Gastrocnemius medialis (tissue), 4 donors: ENCODE measurements at regions of chr10 and their contacts with region 1.

Region 1: GRCh38 chr10:17872191-17873091 is 63.3 kb downstream of the MRC1 start:
- DNase-seq: no peak
- ATAC-seq: no peak
- H3K4me3 ChIP-seq: no peak overlapping the region
- H3K27ac ChIP-seq: no peak overlapping the region
- H3K4me1 ChIP-seq: no peaks in the 10 kb centered on the region
- H3K27me3 ChIP-seq: no peaks in the 10 kb centered on the region
- CTCF ChIP-seq: peak in 4 of 5 experiments; percentile 30 to 49 (median 40)
- POLR2A ChIP-seq: no peak

Region 2: GRCh38 chr10:17607603-17608332 is 264.7 kb before region 1 on chr10:
- in situ Hi-C with region 1: loop called in 3 of 4 experiments (anchors 10 kb)
- intact Hi-C with region 1: loop called (anchors 1 kb)
- DNase-seq: no peak
- ATAC-seq: peak; percentile 91 to 92
- H3K4me3 ChIP-seq: no peak overlapping the region
- H3K27ac ChIP-seq: no peak overlapping the region
- H3K4me1 ChIP-seq: no peaks in the 10 kb centered on the region
- H3K27me3 ChIP-seq: no peaks in the 10 kb centered on the region
- CTCF ChIP-seq: peak; percentile 64 to 94 (median 90)
- POLR2A ChIP-seq: no peak

Region 3: GRCh38 chr10:17685233-17685840 is 187.1 kb before region 1 on chr10:
- in situ Hi-C with region 1: no loop called
- intact Hi-C with region 1: no loop called
- DNase-seq: no peak
- ATAC-seq: no peak
- H3K4me3 ChIP-seq: no peak overlapping the region
- H3K27ac ChIP-seq: no peak overlapping the region
- H3K4me1 ChIP-seq: peaks cover 23 to 31% of the 10 kb centered on the region in 2 donors
- H3K27me3 ChIP-seq: no peaks in the 10 kb centered on the region
- CTCF ChIP-seq: no peak
- POLR2A ChIP-seq: no peak

Region 4: GRCh38 chr10:17737027-17737965 is 135.1 kb before region 1 on chr10:
- in situ Hi-C with region 1: no loop called
- intact Hi-C with region 1: loop called (anchors 1 kb)
- DNase-seq: peak in 1 of 2 donors; percentile 70
- ATAC-seq: peak in 1 of 2 donors; percentile 32
- H3K4me3 ChIP-seq: no peak overlapping the region
- H3K27ac ChIP-seq: no peak overlapping the region
- H3K4me1 ChIP-seq: peaks cover 13 to 17% of the 10 kb centered on the region in 2 donors
- H3K27me3 ChIP-seq: no peaks in the 10 kb centered on the region
- CTCF ChIP-seq: peak in 4 of 5 experiments; percentile 38 to 72 (median 56)
- POLR2A ChIP-seq: no peak